CD4-positive, alpha-beta memory T cell (primary cell): ENCODE measurements at regions of chr1 and their contacts with region 1.

Region 1: GRCh38 chr1:32215629-32216480 is 6.3 kb downstream of the TMEM234 start:
- DNase-seq: peak; percentile 45 to 65 (median 56)
- H3K4me3 ChIP-seq: no peak overlapping the region
- H3K4me3 Mint-ChIP-seq: peak overlapping the region in 3 of 8 donors; percentile 21 to 66 (median 58)
- H3K27ac ChIP-seq: no peak overlapping the region
- H3K27ac Mint-ChIP-seq: peak overlapping the region; percentile 38 to 90 (median 72)
- H3K4me1 ChIP-seq: peaks cover 17% of the 10 kb centered on the region
- H3K4me1 Mint-ChIP-seq: peaks cover 13 to 37% (median 25%) of the 10 kb centered on the region in 4 donors
- H3K27me3 ChIP-seq: no peaks in the 10 kb centered on the region
- H3K27me3 Mint-ChIP-seq: no peaks in the 10 kb centered on the region

Region 2: DNA sequence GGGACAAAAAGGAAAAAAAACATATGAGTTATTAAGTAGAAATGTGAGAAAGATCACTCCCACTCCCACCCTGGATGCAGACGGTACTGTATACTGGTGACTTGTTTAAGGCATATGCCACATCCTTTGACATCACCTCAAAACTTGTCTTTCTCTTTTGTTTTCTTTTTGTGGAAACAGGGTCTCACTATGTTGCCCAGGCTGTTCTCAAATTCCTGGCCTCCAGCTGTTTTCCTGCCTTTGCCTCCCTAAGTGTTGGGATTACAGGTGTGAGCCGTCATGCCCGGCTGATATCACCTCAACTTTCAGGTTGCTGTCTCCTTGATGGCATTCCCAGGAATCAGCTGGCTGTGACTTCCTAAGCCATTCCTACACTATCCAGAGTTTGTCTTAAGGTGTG is 220.6 kb before region 1 on chr1:
- CTCF ChIA-PET with region 1: no interaction called
- POLR2A ChIA-PET with region 1: no interaction called
- intact Hi-C with region 1: no loop called
- DNase-seq: no peak
- H3K4me3 ChIP-seq: no peak overlapping the region
- H3K4me3 Mint-ChIP-seq: no peak overlapping the region
- H3K27ac ChIP-seq: no peak overlapping the region
- H3K27ac Mint-ChIP-seq: no peak overlapping the region
- H3K4me1 ChIP-seq: peaks cover 3% of the 10 kb centered on the region
- H3K4me1 Mint-ChIP-seq: peaks cover 3 to 8% (median 5%) of the 10 kb centered on the region in 4 donors
- H3K27me3 ChIP-seq: no peaks in the 10 kb centered on the region
- H3K27me3 Mint-ChIP-seq: no peaks in the 10 kb centered on the region

Region 3: GRCh38 chr1:32205401-32206370 is 10.2 kb before region 1 on chr1 and contains the start of gene IQCC:
- CTCF ChIA-PET with region 1: interaction called, 31 read pairs
- POLR2A ChIA-PET with region 1: interaction called, 29 read pairs
- intact Hi-C with region 1: no loop called
- DNase-seq: peak; percentile 84 to 86 (median 86)
- H3K4me3 ChIP-seq: peak within 1 kb of the TSS; percentile 71 to 73
- H3K4me3 Mint-ChIP-seq: peak within 1 kb of the TSS; percentile 86 to 91 (median 89)
- H3K27ac ChIP-seq: peak within 1 kb of the TSS; percentile 63
- H3K27ac Mint-ChIP-seq: peak within 1 kb of the TSS; percentile 83 to 95 (median 92)
- H3K4me1 ChIP-seq: peaks cover 39% of the 10 kb centered on the region
- H3K4me1 Mint-ChIP-seq: peaks cover 15 to 48% (median 33%) of the 10 kb centered on the region in 4 donors
- H3K27me3 ChIP-seq: no peaks in the 10 kb centered on the region
- H3K27me3 Mint-ChIP-seq: no peaks in the 10 kb centered on the region
- total RNA-seq, gene IQCC: 2.7 TPM

Region 4: DNA sequence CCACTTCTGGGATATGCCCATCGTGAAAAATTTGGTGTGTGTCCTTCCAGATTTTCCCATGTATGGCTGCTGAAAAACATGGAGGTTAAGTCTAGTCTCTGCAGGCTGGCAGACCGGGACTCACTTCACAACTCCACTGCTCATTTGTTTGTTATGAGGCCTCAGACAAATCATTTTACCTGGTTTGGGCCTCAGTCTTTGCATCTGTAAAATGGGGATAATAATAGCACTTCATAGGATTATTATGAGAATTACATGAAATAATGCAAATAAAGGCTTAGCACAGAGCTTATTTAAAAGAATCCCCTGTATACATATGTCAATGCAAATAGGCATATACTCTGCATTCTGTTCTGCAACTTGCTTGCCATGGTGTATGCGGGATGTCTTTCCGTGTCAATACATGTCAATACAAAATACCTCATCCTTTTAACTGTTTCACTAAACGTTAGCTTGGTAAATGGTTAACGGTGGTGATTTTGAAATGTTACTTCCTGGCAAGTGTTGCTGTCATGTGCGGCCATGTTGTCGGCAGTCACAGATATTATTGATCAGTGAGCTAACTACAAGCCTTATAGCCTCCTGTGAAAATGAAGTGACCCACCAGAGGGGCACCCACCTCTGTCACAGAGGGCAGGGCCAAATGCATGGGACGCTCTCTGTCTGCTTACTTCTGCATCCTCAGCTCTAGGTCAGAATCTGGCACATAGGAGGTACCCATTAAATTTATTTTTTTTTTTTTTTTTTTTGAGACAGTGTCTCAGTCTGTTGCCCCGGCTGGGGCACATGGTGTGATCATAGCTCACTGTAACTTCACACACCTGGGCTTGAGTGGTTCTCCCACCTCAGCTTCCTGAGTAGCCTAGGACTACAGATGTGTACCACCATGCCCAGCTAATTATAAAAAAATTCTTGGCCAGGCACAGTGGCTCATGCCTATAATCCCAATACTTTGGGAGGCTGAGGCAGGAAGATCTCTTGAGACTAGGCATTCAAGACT is 39.5 kb after region 1 on chr1:
- CTCF ChIA-PET with region 1: interaction called, 65 read pairs
- POLR2A ChIA-PET with region 1: interaction called, 21 read pairs
- intact Hi-C with region 1: no loop called
- DNase-seq: peak in 3 of 5 donors; percentile 38 to 49 (median 46)
- H3K4me3 ChIP-seq: peak overlapping the region; percentile 15 to 95
- H3K4me3 Mint-ChIP-seq: peak overlapping the region; percentile 86 to 100 (median 92)
- H3K27ac ChIP-seq: peak overlapping the region; percentile 58
- H3K27ac Mint-ChIP-seq: peak overlapping the region; percentile 71 to 94 (median 91)
- H3K4me1 ChIP-seq: peaks cover 50% of the 10 kb centered on the region
- H3K4me1 Mint-ChIP-seq: peaks cover 30 to 77% (median 44%) of the 10 kb centered on the region in 4 donors
- H3K27me3 ChIP-seq: no peaks in the 10 kb centered on the region
- H3K27me3 Mint-ChIP-seq: no peaks in the 10 kb centered on the region

Region 5: GRCh38 chr1:32321712-32322291 is 105.9 kb after region 1 on chr1:
- CTCF ChIA-PET with region 1: interaction called, 47 read pairs
- POLR2A ChIA-PET with region 1: interaction called, 7 read pairs
- intact Hi-C with region 1: no loop called
- DNase-seq: peak; percentile 55 to 66 (median 59)
- H3K4me3 ChIP-seq: no peak overlapping the region
- H3K4me3 Mint-ChIP-seq: peak overlapping the region; percentile 72 to 85 (median 78)
- H3K27ac ChIP-seq: peak overlapping the region; percentile 18
- H3K27ac Mint-ChIP-seq: peak overlapping the region; percentile 88 to 96 (median 90)
- H3K4me1 ChIP-seq: peaks cover 63% of the 10 kb centered on the region
- H3K4me1 Mint-ChIP-seq: peaks cover 26 to 55% (median 42%) of the 10 kb centered on the region in 4 donors
- H3K27me3 ChIP-seq: no peaks in the 10 kb centered on the region
- H3K27me3 Mint-ChIP-seq: no peaks in the 10 kb centered on the region

Region 6: GRCh38 chr1:32372149-32372756 is 156.4 kb after region 1 on chr1:
- CTCF ChIA-PET with region 1: interaction called, 87 read pairs
- POLR2A ChIA-PET with region 1: interaction called, 13 read pairs
- intact Hi-C with region 1: loop called (anchors 1 kb)
- DNase-seq: peak; percentile 74 to 86 (median 77)
- H3K4me3 ChIP-seq: no peak overlapping the region
- H3K4me3 Mint-ChIP-seq: peak overlapping the region in 4 of 8 donors; percentile 5 to 36 (median 16)
- H3K27ac ChIP-seq: no peak overlapping the region
- H3K27ac Mint-ChIP-seq: peak overlapping the region in 6 of 7 donors; percentile 10 to 80 (median 47)
- H3K4me1 ChIP-seq: peaks cover 15% of the 10 kb centered on the region
- H3K4me1 Mint-ChIP-seq: peaks cover 13 to 22% (median 20%) of the 10 kb centered on the region in 4 donors
- H3K27me3 ChIP-seq: no peaks in the 10 kb centered on the region
- H3K27me3 Mint-ChIP-seq: no peaks in the 10 kb centered on the region

Region 7: GRCh38 chr1:32413507-32414185 is 197.8 kb after region 1 on chr1:
- CTCF ChIA-PET with region 1: interaction called, 19 read pairs
- POLR2A ChIA-PET with region 1: no interaction called
- intact Hi-C with region 1: loop called (anchors 1 kb)
- DNase-seq: peak; percentile 70 to 81 (median 73)
- H3K4me3 ChIP-seq: no peak overlapping the region
- H3K4me3 Mint-ChIP-seq: no peak overlapping the region
- H3K27ac ChIP-seq: no peak overlapping the region
- H3K27ac Mint-ChIP-seq: peak overlapping the region in 2 of 7 donors; percentile 40 to 54
- H3K4me1 ChIP-seq: no peaks in the 10 kb centered on the region
- H3K4me1 Mint-ChIP-seq: peaks cover 2 to 3% (median 3%) of the 10 kb centered on the region in 4 donors
- H3K27me3 ChIP-seq: no peaks in the 10 kb centered on the region
- H3K27me3 Mint-ChIP-seq: peaks cover 8 to 9% of the 10 kb centered on the region in 2 donors